Esophagus muscularis mucosa (tissue), 4 donors: ENCODE measurements at regions of chr4 and their contacts with region 1.

Region 1: GRCh38 chr4:182938205-182938645 is 21.0 kb upstream of the DCTD start:
- DNase-seq: no peak
- H3K4me3 ChIP-seq: no peak overlapping the region
- H3K27ac ChIP-seq: no peak overlapping the region
- H3K4me1 ChIP-seq: peaks cover 0 to 6% (median 3%) of the 10 kb centered on the region in 4 donors
- H3K27me3 ChIP-seq: peaks cover 0 to 4% (median 0%) of the 10 kb centered on the region in 4 donors
- CTCF ChIP-seq: peak; percentile 76 to 93 (median 82)
- EP300 ChIP-seq: no peak
- POLR2A ChIP-seq: no peak

Region 2: GRCh38 chr4:182778222-182778982 is 159.8 kb before region 1 on chr4:
- intact Hi-C with region 1: no loop called
- DNase-seq: no peak
- H3K4me3 ChIP-seq: no peak overlapping the region
- H3K27ac ChIP-seq: no peak overlapping the region
- H3K4me1 ChIP-seq: no peaks in the 10 kb centered on the region
- H3K27me3 ChIP-seq: no peaks in the 10 kb centered on the region
- CTCF ChIP-seq: no peak
- EP300 ChIP-seq: no peak
- POLR2A ChIP-seq: no peak

Region 3: GRCh38 chr4:182847576-182848450 is 90.4 kb before region 1 on chr4:
- intact Hi-C with region 1: no loop called
- DNase-seq: no peak
- H3K4me3 ChIP-seq: no peak overlapping the region
- H3K27ac ChIP-seq: no peak overlapping the region
- H3K4me1 ChIP-seq: no peaks in the 10 kb centered on the region
- H3K27me3 ChIP-seq: peaks cover 0 to 4% (median 0%) of the 10 kb centered on the region in 4 donors
- CTCF ChIP-seq: no peak
- EP300 ChIP-seq: no peak
- POLR2A ChIP-seq: no peak

Region 4: DNA sequence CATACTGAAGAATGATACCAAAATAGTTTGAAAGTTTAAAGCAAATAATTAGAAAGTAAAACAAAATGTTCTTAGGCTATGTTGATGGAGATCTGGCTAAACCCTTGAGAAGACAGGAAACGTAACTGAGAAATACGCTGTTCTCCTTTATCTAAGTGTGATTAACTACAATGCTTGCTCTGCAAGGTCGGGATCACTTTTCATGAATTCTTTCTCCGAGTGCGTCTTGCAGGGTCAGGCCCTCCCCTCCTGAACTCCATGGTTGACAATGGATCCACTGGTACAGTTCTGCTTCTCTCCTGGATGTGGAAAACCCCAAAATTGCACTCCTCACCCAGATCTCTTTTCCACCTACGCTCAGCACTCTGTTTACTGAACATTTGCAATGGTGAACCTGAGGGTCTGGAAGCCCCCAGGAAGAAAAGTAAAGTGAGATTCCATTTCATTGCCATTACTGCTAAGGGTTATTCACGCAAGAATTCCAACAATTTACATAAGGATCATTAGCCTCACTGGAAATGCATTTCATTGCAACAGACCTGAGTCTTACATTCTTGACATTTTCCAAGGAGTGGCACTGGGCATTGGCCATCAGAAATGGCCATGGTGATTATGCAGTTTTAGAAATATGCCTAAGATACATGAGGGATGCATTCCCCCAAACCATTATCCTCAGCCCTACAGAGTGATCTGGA is 136.2 kb after region 1 on chr4:
- intact Hi-C with region 1: loop called (anchors 5 kb)
- DNase-seq: no peak
- H3K4me3 ChIP-seq: no peak overlapping the region
- H3K27ac ChIP-seq: no peak overlapping the region
- H3K4me1 ChIP-seq: peaks cover 0 to 3% (median 0%) of the 10 kb centered on the region in 4 donors
- H3K27me3 ChIP-seq: no peaks in the 10 kb centered on the region
- CTCF ChIP-seq: no peak
- EP300 ChIP-seq: no peak
- POLR2A ChIP-seq: no peak

Region 5: DNA sequence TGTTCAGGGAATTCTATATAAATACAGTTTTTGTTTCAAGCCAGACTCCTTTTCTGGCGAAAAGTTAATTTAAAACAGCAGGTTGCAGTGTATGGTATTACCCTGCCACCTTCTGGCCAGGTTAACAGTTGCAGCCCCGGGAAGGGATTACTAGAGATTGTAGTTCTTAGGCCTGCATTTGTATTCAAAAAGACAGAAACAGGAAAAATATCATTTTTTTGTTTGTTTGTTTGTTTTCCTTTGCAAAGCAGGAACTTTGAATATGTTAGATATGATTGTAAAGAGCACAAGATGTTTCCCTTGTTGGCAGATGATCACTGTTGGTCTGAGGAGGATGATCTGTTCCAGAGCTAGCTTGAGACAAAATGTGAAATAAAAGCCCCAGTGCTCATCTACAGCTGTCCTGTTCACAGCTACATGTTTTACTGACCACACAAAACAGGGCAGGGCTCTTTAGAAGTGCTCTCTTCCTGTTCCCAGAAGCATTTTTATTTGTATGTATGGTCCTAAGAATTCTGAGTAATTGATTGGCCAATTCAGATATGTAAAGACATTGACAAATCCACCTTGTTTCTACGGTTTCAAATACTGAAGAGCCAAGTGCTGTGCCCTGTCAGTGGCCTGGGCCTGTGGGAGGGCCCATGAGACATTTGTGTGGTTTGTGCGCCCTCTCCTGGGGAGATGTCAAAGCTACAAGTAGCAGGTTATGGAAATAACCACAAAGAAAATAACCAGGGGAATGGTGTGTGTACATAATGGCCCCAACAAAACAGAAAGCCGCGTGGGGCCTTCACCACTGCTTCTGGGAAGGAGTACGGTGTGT is 323.9 kb after region 1 on chr4:
- intact Hi-C with region 1: loop called (anchors 2 kb)
- DNase-seq: peak; percentile 93
- H3K4me3 ChIP-seq: no peak overlapping the region
- H3K27ac ChIP-seq: peak overlapping the region; percentile 19 to 47 (median 40)
- H3K4me1 ChIP-seq: peaks cover 8 to 16% (median 15%) of the 10 kb centered on the region in 4 donors
- H3K27me3 ChIP-seq: no peaks in the 10 kb centered on the region
- CTCF ChIP-seq: peak; percentile 73 to 79 (median 76)
- EP300 ChIP-seq: no peak
- POLR2A ChIP-seq: no peak